Heart right ventricle (tissue), 16 donors: ENCODE measurements at regions of chr10 and their contacts with region 1.

Region 1: DNA sequence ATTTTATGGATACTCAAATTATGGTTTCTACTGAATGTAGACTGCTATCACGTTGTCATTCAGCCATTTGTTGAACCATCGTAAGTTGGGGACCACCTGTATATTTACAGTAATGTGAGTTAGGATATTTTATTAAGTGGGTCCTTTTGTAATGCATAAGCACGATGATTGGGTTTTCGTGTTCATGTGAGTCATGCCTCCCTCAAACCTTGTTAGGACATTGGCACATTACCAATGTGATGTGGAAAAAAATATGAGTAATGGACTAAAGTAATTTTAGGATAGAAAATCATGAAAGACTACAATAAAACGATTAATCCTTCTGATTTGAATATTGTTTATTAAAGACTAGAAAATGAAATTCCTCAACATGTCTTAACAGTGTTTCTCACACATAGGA is 8.7 kb downstream of the SMC3 start:
- DNase-seq: no peak
- ATAC-seq: no peak
- H3K4me3 ChIP-seq: no peak overlapping the region
- H3K27ac ChIP-seq: peak overlapping the region in 1 of 10 donors; percentile 4
- H3K4me1 ChIP-seq: peaks cover 0 to 47% (median 22%) of the 10 kb centered on the region in 9 donors
- H3K27me3 ChIP-seq: no peaks in the 10 kb centered on the region
- CTCF ChIP-seq: no peak

Region 2: GRCh38 chr10:110901954-110902819 is 326.0 kb after region 1 on chr10:
- intact Hi-C with region 1: loop called in 1 of 10 experiments (anchors 10 kb)
- DNase-seq: no peak
- ATAC-seq: peak in 1 of 8 donors; percentile 27
- H3K4me3 ChIP-seq: no peak overlapping the region
- H3K27ac ChIP-seq: no peak overlapping the region
- H3K4me1 ChIP-seq: peaks cover 0 to 11% (median 0%) of the 10 kb centered on the region in 9 donors
- H3K27me3 ChIP-seq: no peaks in the 10 kb centered on the region
- CTCF ChIP-seq: no peak